Activated T-helper 1 cell treated with anti-CD3 and anti-CD28 coated beads, Interleukin-12 subunit alpha, Interleukin-12 subunit beta, Interleukin-2, Interleukin-4 antibody, amounts not matched to agents 30 ng/mL and 10 ng/mL and 1 ng/mL, durations not matched to agents 14 hours and 24 hours and 36 hours (primary cell): ENCODE measurements at regions of chr17 and their contacts with region 1.

Region 1: GRCh38 chr17:34542700-34543336 is 36.6 kb upstream of the TMEM132E start:
- DNase-seq: peak; percentile 17
- H3K4me3 Mint-ChIP-seq: no peak overlapping the region
- H3K27ac Mint-ChIP-seq: no peak overlapping the region
- H3K4me1 Mint-ChIP-seq: no peaks in the 10 kb centered on the region
- H3K27me3 Mint-ChIP-seq: peaks cover 21% of the 10 kb centered on the region

Region 2: DNA sequence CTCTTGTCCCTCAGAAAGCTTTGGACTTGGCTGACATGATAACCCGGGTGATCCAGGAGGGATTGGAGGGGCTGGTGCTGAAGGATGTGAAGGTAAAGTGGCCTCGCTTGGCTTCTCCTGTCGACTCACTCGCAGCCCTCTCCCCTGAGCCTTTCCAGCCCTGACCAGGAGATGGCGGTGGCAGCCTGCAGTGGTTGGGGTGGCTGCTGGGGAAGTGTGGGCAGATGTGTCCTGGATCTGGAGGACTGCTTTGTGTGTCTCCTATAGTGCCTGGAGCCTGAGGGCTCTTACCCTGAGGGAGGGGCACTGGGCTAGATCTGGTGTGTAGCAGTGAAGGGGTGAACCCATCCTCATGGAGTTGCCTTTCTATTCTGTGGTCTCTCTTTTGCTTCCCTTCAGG is 455.4 kb after region 1 on chr17:
- intact Hi-C with region 1: loop called (anchors 5 kb)
- DNase-seq: peak; percentile 77
- H3K4me3 Mint-ChIP-seq: no peak overlapping the region
- H3K27ac Mint-ChIP-seq: peak overlapping the region; percentile 11
- H3K4me1 Mint-ChIP-seq: peaks cover 21% of the 10 kb centered on the region
- H3K27me3 Mint-ChIP-seq: no peaks in the 10 kb centered on the region